ENCODE measurements at regions of chr6 and their contacts with region 1.

Region 1: DNA sequence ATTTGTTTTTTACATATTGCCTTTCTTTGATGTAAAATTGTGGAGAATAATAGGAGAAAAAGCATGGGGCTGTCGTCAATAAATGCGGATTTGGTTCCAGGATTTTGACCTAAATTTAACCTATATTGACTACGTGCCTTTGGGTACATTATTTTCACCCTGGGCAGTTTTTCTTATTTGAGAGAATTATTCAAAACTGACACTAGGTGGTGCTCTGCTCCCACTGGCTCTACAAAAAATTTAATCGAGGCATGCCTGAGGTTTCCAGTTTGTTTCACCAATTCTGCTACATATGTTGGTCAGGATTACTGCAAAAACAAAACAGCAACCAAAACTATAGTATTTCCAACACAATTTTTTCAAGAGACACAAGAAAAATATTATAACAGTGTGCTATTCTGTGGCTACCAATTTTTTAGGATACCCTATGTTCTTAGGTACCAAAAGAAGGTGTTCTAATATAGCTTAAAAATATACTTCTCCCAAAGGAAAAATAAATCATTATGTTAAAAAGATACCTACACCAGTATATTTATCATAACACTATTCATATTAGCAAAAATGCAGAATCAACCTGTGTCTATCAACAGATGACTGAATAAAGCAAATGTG is 48.6 kb upstream of the FABP7 start:
- DNase-seq: peak; percentile 81
- H3K4me3 ChIP-seq: no peak overlapping the region
- H3K27ac ChIP-seq: no peak overlapping the region
- H3K4me1 ChIP-seq: peaks cover 39% of the 10 kb centered on the region
- H3K27me3 ChIP-seq: no peaks in the 10 kb centered on the region
- CTCF ChIP-seq: peak; percentile 82

Region 2: DNA sequence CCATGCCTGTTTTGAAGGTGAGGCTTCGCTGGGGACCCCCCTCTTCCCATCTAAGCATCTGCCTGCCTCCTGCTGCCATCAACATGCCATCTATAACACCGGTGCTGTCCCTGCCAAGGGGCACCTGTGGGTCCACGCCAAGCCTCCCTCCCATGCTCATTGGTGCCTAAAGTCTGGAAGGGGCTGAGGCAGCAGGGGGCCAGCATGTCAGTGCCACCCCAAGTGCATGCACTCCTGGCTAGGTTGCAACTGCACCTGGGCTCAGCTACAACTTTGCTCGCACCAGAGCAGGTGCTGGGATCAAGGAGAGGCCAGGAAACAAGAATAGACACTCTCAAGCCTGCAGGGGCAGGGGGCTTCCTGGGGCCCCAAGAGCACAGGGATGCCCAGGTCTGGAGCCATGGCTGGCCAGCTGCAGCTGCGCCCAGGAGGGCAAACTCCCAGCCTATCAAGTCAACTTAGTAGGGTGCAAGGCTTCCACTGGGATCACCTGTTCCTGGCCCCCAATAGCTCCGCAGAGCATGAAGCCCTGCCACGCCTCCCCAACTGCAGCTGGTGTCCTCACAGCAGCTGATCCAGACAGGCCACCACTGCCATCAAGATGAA is 482.7 kb before region 1 on chr6:
- CTCF ChIA-PET with region 1: no interaction called
- POLR2A ChIA-PET with region 1: no interaction called
- intact Hi-C with region 1: no loop called
- DNase-seq: no peak
- H3K4me3 ChIP-seq: no peak overlapping the region
- H3K27ac ChIP-seq: no peak overlapping the region
- H3K4me1 ChIP-seq: no peaks in the 10 kb centered on the region
- H3K27me3 ChIP-seq: no peaks in the 10 kb centered on the region
- CTCF ChIP-seq: no peak

Region 3: GRCh38 chr6:122491919-122492555 is 238.8 kb before region 1 on chr6:
- CTCF ChIA-PET with region 1: no interaction called
- POLR2A ChIA-PET with region 1: interaction called, 3 read pairs
- intact Hi-C with region 1: loop called (anchors 2 kb)
- DNase-seq: peak; percentile 89
- H3K4me3 ChIP-seq: no peak overlapping the region
- H3K27ac ChIP-seq: no peak overlapping the region
- H3K4me1 ChIP-seq: no peaks in the 10 kb centered on the region
- H3K27me3 ChIP-seq: no peaks in the 10 kb centered on the region
- CTCF ChIP-seq: peak; percentile 96

Region 4: GRCh38 chr6:122995921-122996793 is 265.3 kb after region 1 on chr6 and contains the start of gene CLVS2:
- CTCF ChIA-PET with region 1: no interaction called
- POLR2A ChIA-PET with region 1: no interaction called
- intact Hi-C with region 1: loop called (anchors 2 kb)
- DNase-seq: peak; percentile 95
- H3K4me3 ChIP-seq: peak within 1 kb of the TSS; percentile 86
- H3K27ac ChIP-seq: peak within 1 kb of the TSS; percentile 80
- H3K4me1 ChIP-seq: peaks cover 18% of the 10 kb centered on the region
- H3K27me3 ChIP-seq: no peaks in the 10 kb centered on the region
- CTCF ChIP-seq: no peak
- total RNA-seq, gene CLVS2: 84.9 and 89.6 TPM in 2 replicates

Region 5: DNA sequence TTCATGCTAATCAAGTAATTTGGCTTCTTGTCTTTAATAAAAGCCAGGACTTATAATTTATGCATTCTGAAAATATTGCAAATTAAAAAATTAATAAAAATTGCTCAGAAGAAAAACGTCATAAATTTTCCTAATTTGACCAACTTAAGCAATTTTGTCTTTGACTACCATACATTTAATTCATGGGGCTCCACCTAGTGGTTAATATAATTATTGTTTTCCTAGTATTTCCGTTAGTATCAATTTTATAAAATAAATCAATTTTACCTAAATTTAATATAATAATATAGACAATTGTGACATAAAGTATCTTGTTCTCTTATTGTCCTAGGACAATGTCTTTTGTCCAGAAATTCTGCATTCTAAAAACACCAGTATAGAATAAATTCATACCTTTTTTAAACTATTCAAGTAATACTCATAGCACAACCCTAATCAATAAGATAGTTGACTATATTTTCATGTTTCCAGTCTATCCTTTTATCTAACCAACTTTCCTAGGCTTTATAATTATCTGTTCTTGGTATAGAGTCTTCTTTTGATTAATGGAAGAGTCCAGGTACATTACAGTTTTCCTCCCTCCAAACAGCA is 585.9 kb after region 1 on chr6:
- CTCF ChIA-PET with region 1: no interaction called
- POLR2A ChIA-PET with region 1: no interaction called
- intact Hi-C with region 1: loop called (anchors 5 kb)
- DNase-seq: peak; percentile 62
- H3K4me3 ChIP-seq: no peak overlapping the region
- H3K27ac ChIP-seq: peak overlapping the region; percentile 23
- H3K4me1 ChIP-seq: peaks cover 7% of the 10 kb centered on the region
- H3K27me3 ChIP-seq: no peaks in the 10 kb centered on the region
- CTCF ChIP-seq: peak; percentile 72

Region 6: DNA sequence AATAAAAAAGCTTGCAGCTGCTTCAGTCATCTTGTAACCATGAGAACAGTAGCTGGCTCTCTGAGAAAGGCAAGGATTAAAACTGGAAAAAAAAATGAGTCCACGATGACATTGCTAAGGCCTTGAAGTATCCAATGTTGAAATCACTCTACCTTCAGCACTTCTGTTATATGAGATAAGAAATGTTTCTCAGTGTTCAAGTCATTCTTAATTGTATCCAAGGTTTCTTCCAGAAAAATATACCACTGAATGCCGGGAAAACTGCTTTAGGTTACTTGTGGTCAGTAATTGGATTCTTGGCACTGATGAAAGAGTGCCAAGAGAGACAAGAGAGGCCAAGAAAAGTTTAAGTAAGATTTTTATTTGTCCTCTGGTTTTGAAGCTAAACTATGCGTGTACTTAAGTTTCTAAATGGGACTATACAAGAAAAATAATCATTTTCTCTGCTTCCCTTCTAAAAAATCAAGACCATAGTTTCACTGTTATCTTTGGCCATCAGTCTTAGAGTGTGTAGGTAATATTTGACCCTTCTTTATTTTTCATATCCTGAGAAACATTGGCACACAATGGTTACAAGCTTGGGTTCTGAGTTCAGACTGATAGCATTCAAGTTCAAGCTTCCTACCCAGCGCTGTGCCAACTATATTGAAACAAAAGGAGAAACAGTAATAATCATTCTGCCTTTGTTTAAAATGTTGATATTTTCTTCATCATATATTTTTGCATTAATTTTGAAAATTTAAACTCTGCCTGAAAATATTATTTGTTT is 821.2 kb after region 1 on chr6:
- CTCF ChIA-PET with region 1: no interaction called
- POLR2A ChIA-PET with region 1: no interaction called
- intact Hi-C with region 1: no loop called
- DNase-seq: no peak
- H3K4me3 ChIP-seq: no peak overlapping the region
- H3K27ac ChIP-seq: no peak overlapping the region
- H3K4me1 ChIP-seq: no peaks in the 10 kb centered on the region
- H3K27me3 ChIP-seq: no peaks in the 10 kb centered on the region
- CTCF ChIP-seq: no peak

Region 7: DNA sequence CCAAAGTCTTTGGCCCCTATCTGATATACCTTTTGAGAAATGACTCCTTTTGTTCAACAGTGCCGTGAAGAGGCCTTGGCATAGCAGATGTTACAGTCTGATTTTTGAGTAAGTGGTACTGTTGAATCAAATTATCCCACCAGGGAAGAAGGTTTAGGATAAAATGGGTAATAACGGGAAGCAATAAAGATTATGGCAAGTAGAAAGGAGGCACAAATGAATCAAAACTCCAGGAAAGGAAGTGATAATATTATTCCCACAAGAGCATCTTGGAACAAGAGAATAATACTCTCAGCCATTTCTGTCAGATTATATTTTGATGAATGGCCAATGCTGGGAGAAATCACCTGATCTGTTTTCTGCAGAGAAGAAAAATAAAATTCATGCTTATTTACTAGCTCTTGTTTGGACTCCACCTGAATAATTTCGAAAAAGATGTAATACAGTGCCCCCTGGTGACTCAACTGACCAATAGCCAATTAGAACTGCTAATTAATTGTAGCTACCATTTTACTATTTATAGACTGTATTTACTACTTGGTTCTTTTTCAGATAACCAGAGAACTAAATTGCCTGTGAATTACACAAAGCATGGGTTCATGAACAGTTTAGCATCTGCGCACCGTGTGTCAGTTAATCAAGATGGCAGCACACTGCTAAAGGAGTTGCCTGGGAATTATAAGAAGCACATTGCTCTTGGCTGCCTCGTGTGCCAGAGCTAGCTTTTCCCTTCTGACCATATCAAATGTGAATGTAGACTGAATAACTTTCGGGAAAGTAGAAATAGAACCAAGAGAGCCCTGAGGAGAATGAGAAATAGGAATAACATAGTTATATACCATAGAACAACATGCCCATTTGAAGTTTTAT is 984.4 kb after region 1 on chr6:
- CTCF ChIA-PET with region 1: no interaction called
- POLR2A ChIA-PET with region 1: no interaction called
- intact Hi-C with region 1: loop called (anchors 10 kb)
- DNase-seq: peak; percentile 81
- H3K4me3 ChIP-seq: no peak overlapping the region
- H3K27ac ChIP-seq: peak overlapping the region; percentile 71
- H3K4me1 ChIP-seq: peaks cover 29% of the 10 kb centered on the region
- H3K27me3 ChIP-seq: no peaks in the 10 kb centered on the region
- CTCF ChIP-seq: peak; percentile 77